ENCODE measurements at regions of chr17 and their contacts with region 1.

Region 1: DNA sequence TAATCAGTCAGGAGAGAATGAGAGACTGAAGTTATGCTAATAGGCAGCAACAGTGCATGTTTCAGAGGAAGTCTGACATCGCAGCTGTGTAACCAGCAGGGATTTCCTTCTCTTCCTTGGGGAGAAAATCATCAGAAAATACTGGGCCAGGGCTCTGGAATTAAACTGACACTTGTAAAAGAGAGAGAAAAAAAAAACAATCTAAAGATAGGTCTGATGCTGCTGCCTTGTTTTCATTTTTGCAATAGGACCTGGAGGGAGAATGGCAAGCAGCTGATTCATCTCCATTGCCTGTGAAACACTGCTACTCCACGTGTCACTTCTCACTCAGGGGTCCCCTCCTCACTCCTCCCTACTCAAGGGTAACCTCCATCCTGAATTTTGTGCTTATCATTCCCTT is 17.7 kb upstream of the CORO6 start:
- DNase-seq: no peak
- H3K4me3 ChIP-seq: no peak overlapping the region
- H3K27ac ChIP-seq: peak overlapping the region; percentile 60 to 82 (median 70)
- H3K4me1 ChIP-seq: peaks cover 0 to 57% (median 29%) of the 10 kb centered on the region in 4 donors
- H3K27me3 ChIP-seq: no peaks in the 10 kb centered on the region
- CTCF ChIP-seq: no peak
- EP300 ChIP-seq: no peak
- POLR2A ChIP-seq: no peak

Region 2: DNA sequence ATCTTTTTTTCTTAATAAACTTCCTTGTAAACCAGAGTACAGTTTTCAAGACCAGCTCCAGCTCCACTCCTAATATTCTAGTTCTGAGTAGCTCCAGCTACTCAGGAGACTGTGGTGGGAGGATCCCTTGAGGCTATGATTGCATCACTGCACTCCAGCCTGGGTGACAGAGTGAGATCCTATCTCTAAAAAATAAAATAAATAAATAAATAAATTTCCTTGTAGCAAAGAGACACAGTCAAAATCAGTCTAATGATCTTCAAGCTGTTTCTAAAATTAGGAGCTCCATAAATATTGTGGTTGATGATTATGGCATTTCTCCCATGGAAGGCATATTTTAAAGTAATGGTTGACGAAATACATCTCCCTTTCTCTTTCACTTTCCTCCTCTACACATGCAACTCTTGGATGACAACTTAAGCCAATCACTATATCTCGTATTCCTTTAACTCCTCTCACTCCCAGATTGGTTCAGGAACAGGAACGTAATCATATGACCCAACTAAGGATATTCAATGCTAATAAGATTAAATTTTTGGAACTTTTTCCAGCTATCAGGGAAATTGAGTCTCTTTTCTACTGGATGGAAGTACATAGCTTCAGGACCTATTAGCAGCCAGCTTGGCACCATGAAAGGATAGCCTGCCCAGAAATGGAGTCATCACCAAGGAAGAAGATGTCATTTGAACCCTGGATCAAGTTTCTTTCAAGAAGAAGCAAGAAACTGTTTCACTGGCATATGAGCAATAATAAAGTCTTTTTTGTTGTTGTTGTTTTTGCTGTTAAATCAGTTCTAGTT is 292.4 kb before region 1 on chr17:
- intact Hi-C with region 1: no loop called
- DNase-seq: no peak
- H3K4me3 ChIP-seq: no peak overlapping the region
- H3K27ac ChIP-seq: no peak overlapping the region
- H3K4me1 ChIP-seq: no peaks in the 10 kb centered on the region
- H3K27me3 ChIP-seq: no peaks in the 10 kb centered on the region
- CTCF ChIP-seq: no peak
- EP300 ChIP-seq: no peak
- POLR2A ChIP-seq: no peak

Region 3: GRCh38 chr17:29483503-29483902 is 156.9 kb before region 1 on chr17:
- intact Hi-C with region 1: no loop called
- DNase-seq: no peak
- H3K4me3 ChIP-seq: no peak overlapping the region
- H3K27ac ChIP-seq: no peak overlapping the region
- H3K4me1 ChIP-seq: no peaks in the 10 kb centered on the region
- H3K27me3 ChIP-seq: no peaks in the 10 kb centered on the region
- CTCF ChIP-seq: no peak
- EP300 ChIP-seq: no peak
- POLR2A ChIP-seq: no peak

Region 4: GRCh38 chr17:29722411-29723198 is 82.2 kb after region 1 on chr17:
- intact Hi-C with region 1: loop called (anchors 5 kb)
- DNase-seq: peak; percentile 78
- H3K4me3 ChIP-seq: peak overlapping the region in 1 of 4 donors; percentile 5
- H3K27ac ChIP-seq: peak overlapping the region; percentile 38 to 71 (median 65)
- H3K4me1 ChIP-seq: peaks cover 0 to 21% (median 0%) of the 10 kb centered on the region in 4 donors
- H3K27me3 ChIP-seq: no peaks in the 10 kb centered on the region
- CTCF ChIP-seq: no peak
- EP300 ChIP-seq: no peak
- POLR2A ChIP-seq: no peak

Region 5: DNA sequence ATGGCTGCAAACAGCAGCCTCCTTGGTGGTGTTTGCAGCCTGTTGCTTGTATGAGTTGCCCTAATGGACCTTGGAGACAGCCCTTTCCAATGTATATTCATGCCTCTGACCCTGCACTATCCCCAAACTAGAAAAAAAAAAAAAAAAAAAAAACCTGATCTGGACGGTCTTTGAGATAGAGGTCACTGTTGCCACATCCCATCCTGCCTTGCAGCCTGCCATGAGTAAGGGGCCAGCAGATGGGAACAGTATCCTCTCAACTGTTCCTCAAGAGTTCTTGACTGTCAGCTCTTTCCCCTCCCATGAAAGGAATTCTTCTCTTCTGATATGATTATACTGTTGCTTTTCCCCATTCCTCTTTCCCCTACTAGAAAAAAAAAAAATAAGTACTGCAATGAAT is 137.2 kb after region 1 on chr17:
- intact Hi-C with region 1: loop called (anchors 1 kb)
- DNase-seq: no peak
- H3K4me3 ChIP-seq: no peak overlapping the region
- H3K27ac ChIP-seq: no peak overlapping the region
- H3K4me1 ChIP-seq: peaks cover 0 to 4% (median 0%) of the 10 kb centered on the region in 4 donors
- H3K27me3 ChIP-seq: no peaks in the 10 kb centered on the region
- CTCF ChIP-seq: no peak
- EP300 ChIP-seq: no peak
- POLR2A ChIP-seq: no peak